Heart left ventricle (tissue), 16 donors: ENCODE measurements at regions of chr3 and their contacts with region 1.

Region 1: GRCh38 chr3:21682206-21682605 is 68.8 kb downstream of the ZNF385D start:
- DNase-seq: no peak
- ATAC-seq: no peak
- H3K4me3 ChIP-seq: no peak overlapping the region
- H3K27ac ChIP-seq: peak overlapping the region in 2 of 12 donors; percentile 4 to 39
- H3K4me1 ChIP-seq: peaks cover 0 to 34% (median 8%) of the 10 kb centered on the region in 12 donors
- H3K27me3 ChIP-seq: no peaks in the 10 kb centered on the region
- CTCF ChIP-seq: no peak
- POLR2A ChIP-seq: no peak

Region 2: DNA sequence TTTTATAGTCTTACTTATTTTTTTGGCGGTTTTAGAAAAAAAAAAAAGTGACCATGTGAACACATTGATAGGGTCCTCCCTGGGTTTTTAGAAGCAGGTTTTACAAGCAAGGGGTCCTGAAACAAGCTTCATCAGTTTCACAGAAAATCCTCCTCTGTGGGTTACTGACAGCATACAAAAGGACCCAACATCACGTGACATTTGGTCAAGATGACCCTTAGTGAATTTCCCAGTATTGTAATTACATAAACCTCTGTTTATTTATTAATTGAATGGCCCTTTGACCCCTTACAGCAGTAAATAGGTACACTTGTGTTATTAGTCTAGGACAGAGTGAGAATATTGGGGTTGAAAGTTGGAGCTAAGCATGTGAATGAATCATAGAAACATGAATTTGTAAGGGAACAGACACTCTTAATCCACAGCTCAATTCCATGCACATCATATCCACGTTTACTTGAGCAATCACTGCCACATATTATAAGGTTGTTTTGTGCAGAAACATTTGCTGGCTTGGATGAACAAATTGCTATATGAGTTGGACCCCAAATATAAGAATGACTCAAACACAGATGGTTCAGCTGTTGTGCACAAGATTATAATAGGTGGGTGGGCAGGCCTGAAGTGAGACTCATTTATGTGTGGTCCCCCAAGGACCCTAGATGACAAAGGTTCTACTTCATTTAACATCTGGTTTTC is 68.7 kb before region 1 on chr3:
- intact Hi-C with region 1: loop called in 1 of 10 experiments (anchors 5 kb)
- DNase-seq: no peak
- ATAC-seq: no peak
- H3K4me3 ChIP-seq: no peak overlapping the region
- H3K27ac ChIP-seq: no peak overlapping the region
- H3K4me1 ChIP-seq: no peaks in the 10 kb centered on the region
- H3K27me3 ChIP-seq: no peaks in the 10 kb centered on the region
- CTCF ChIP-seq: no peak
- POLR2A ChIP-seq: no peak